ENCODE measurements at regions of chrX and their contacts with region 1.

Region 1: DNA sequence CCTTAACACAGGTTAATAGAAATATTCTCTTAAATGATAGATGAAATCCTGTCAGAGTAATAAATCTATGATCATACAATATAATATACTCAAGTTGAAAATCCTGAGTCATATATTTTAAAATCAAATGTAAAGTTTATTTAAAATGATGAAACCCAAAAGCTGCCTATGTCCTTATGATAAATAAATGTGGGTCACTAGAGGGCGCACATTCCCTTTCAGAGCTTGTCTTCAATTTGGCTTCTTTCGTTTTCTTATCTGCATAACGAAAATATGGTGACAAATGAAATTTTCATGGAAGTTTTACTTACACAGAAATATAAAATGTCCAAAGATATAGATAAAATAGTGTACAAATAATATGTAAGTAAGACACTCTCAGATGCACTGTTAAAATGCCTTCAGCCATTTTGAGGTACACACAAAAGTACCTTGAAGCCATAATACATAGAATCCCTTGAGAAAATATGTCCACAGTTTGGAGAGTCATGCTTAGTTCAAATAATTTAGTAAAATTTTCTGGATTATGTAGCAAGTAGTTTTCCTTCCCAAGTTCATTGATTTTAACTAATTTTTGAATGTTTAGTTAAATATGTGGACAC is 680.4 kb downstream of the DMD start:
- DNase-seq: peak; percentile 21
- ATAC-seq: no peak
- H3K4me3 ChIP-seq: no peak overlapping the region
- H3K27ac ChIP-seq: no peak overlapping the region
- H3K4me1 ChIP-seq: peaks cover 3% of the 10 kb centered on the region
- H3K27me3 ChIP-seq: no peaks in the 10 kb centered on the region
- CTCF ChIP-seq: peak; percentile 51
- EP300 ChIP-seq: no peak
- POLR2A ChIP-seq: no peak
- RAD21 ChIP-seq: no peak

Region 2: GRCh38 chrX:32673193-32673592 is 142.3 kb after region 1 on chrX:
- CTCF ChIA-PET with region 1: interaction called, 3 read pairs
- POLR2A ChIA-PET with region 1: no interaction called
- in situ Hi-C with region 1: loop called (anchors 25 kb)
- intact Hi-C with region 1: loop called (anchors 1 kb)
- DNase-seq: peak; percentile 0
- ATAC-seq: no peak
- H3K4me3 ChIP-seq: no peak overlapping the region
- H3K27ac ChIP-seq: no peak overlapping the region
- H3K4me1 ChIP-seq: no peaks in the 10 kb centered on the region
- H3K27me3 ChIP-seq: no peaks in the 10 kb centered on the region
- CTCF ChIP-seq: no peak
- EP300 ChIP-seq: no peak
- POLR2A ChIP-seq: no peak
- RAD21 ChIP-seq: no peak

Region 3: DNA sequence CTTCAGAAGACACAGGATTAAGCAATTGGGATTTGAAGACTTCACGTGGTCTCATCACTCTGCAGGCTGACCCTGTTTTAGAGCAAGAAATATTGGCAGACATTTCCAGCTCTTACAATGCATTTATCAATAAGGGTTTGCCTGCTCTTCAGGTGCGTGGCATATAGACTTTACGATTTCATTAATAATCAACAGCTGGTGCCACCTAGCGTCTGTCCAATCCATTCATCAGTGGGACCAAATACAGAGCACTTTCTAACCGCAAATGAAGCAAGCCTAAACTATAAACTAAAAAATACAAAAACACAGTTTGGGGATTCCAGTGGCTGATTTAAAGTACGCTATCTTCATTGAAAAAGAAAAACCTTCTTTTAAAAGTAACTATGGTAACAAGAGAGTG is 805.9 kb after region 1 on chrX:
- CTCF ChIA-PET with region 1: no interaction called
- POLR2A ChIA-PET with region 1: no interaction called
- in situ Hi-C with region 1: loop called (anchors 10 kb)
- intact Hi-C with region 1: loop called (anchors 2 kb)
- DNase-seq: peak; percentile 2
- ATAC-seq: peak; percentile 73
- H3K4me3 ChIP-seq: no peak overlapping the region
- H3K27ac ChIP-seq: no peak overlapping the region
- H3K4me1 ChIP-seq: no peaks in the 10 kb centered on the region
- H3K27me3 ChIP-seq: no peaks in the 10 kb centered on the region
- CTCF ChIP-seq: peak; percentile 44
- EP300 ChIP-seq: no peak
- POLR2A ChIP-seq: no peak
- RAD21 ChIP-seq: no peak

Region 4: DNA sequence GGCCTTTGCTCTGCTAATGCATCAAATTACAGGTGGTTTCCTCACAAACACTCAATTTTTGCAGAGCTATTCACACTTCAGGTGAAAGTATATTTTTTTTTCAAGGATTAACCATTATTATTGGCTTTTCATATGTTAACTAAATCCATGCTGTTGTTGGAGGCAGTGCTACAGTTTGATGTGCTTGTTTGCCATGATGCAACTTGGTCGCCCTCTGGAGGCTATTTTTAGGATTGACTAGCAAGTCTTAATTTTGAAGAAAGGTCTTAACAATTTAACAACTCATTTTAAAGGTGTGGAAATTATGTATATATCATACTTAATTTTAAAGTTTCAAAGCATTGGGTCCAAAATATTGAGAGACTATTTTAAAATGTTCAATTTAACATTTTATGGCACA is 1770.0 kb after region 1 on chrX:
- CTCF ChIA-PET with region 1: no interaction called
- POLR2A ChIA-PET with region 1: no interaction called
- in situ Hi-C with region 1: no loop called
- intact Hi-C with region 1: loop called (anchors 5 kb)
- DNase-seq: peak; percentile 6
- ATAC-seq: no peak
- H3K4me3 ChIP-seq: no peak overlapping the region
- H3K27ac ChIP-seq: no peak overlapping the region
- H3K4me1 ChIP-seq: no peaks in the 10 kb centered on the region
- H3K27me3 ChIP-seq: no peaks in the 10 kb centered on the region
- CTCF ChIP-seq: peak; percentile 46
- EP300 ChIP-seq: no peak
- POLR2A ChIP-seq: no peak
- RAD21 ChIP-seq: no peak

Measured in HepG2 (cell line).